ENCODE measurements at regions of chr7 and their contacts with region 1.

Region 1: DNA sequence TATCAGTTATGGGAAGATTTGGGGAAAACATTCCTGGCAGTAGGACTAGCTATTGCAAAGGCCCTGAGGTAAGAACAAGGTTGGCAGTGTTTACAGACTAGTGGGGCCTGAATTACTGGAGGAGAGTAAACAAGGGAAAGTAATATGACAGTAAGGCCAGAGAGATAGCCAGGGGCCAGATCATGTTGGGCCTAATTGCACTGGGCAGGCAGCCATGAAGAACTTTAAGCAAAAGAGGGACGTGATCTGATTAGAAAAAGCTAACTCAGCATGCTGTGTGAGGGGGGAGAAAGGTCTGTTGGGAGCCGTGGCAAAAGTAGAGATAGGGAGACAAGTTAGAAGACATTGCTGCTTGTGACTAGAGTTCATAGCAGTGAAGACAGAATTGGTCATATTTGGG is 9.2 kb downstream of the NUP42 start:
- DNase-seq: no peak
- H3K4me3 ChIP-seq: no peak overlapping the region
- H3K27ac ChIP-seq: no peak overlapping the region
- H3K4me1 ChIP-seq: no peaks in the 10 kb centered on the region
- H3K27me3 ChIP-seq: no peaks in the 10 kb centered on the region
- CTCF ChIP-seq: no peak
- EP300 ChIP-seq: no peak
- POLR2A ChIP-seq: no peak; a peak in 1 of 3 replicates
- RAD21 ChIP-seq: no peak

Region 2: GRCh38 chr7:23117841-23118240 is 73.2 kb before region 1 on chr7:
- CTCF ChIA-PET with region 1: no interaction called
- POLR2A ChIA-PET with region 1: no interaction called
- DNase-seq: no peak
- H3K4me3 ChIP-seq: no peak overlapping the region
- H3K27ac ChIP-seq: peak overlapping the region; percentile 57; the same call in 1 of the 2 replicates
- H3K4me1 ChIP-seq: peaks cover 16 to 41% (median 23%) of the 10 kb centered on the region in 4 experiments
- H3K27me3 ChIP-seq: no peaks in the 10 kb centered on the region
- CTCF ChIP-seq: no peak
- EP300 ChIP-seq: no peak
- POLR2A ChIP-seq: no peak
- RAD21 ChIP-seq: no peak

Region 3: DNA sequence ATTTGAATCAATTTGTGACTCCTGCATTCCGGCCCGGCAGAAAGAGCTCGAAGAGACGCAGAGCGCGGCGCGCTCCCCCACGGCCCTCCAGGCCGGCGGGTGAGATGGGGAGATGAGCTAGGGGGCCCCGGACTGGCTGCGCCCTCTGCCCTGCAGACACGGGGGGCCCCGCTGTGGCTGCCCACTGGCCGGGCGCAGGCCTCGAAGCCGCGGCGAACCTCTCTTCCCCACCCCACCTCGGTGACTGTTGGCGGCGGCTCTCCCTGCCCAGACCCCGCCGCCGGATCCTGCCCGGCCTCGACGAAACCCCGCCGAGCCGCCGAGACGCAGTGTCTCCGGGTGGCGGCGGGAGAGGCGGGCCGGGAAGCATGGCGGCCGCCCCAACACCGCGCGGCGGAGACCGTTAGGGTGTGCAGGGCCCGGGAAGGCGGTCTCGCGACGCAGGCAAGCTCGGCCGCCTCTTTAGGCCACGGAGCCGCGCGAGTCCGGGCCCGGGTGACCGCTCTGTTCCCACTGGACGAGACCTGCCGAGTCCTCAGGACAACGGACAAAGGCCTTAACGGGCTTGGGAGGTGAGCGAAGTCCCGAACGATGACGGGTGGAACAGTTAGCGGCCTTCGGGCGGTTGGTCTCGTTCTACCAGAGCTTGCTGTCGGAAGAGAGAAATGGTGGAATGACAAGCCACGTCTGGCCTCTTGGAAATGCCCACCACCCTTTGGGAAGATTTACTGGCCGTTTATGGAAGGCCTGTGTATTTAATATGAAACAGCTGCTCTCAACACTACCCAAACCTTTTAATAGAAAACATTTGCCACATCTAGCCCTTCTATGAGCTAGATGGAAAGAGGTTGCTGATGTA is 15.1 kb after region 1 on chr7:
- CTCF ChIA-PET with region 1: interaction called, 4 read pairs
- POLR2A ChIA-PET with region 1: interaction called, 10 read pairs
- DNase-seq: no peak
- H3K4me3 ChIP-seq: peak overlapping the region in 1 of 4 experiments; percentile 23; a peak in 1 of 8 replicates
- H3K27ac ChIP-seq: no peak overlapping the region
- H3K4me1 ChIP-seq: no peaks in the 10 kb centered on the region
- H3K27me3 ChIP-seq: no peaks in the 10 kb centered on the region; a peak in 2 of 7 replicates
- CTCF ChIP-seq: no peak
- EP300 ChIP-seq: no peak
- POLR2A ChIP-seq: no peak
- RAD21 ChIP-seq: no peak

Measured in H1 (cell line).